ENCODE measurements at regions of chr15 and their contacts with region 1.

Region 1: DNA sequence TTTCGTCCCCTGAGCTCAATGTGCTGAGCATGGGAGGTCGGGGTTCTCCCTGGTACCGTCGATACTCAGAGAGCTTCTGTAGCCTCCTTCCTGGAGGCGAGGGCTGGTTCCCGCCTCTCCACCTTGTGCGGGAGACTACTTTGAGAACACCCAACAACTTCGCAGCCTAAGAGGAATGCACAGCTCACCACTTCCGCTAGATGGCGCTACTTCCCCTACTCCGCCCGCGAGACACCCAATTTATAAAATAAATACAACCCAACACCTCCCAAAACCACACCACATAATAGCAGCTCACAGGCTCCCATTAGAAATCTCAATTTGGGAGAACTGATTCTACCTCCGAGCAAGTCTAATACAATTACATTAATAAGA is 1.2 kb downstream of the RGMA start:
- DNase-seq: peak; percentile 59 to 65 (median 62)
- H3K4me3 ChIP-seq: peak overlapping the region; percentile 3 to 73 (median 41)
- H3K4me3 Mint-ChIP-seq: peak overlapping the region; percentile 83 to 98
- H3K27ac ChIP-seq: no peak overlapping the region
- H3K27ac Mint-ChIP-seq: peak overlapping the region in 2 of 7 donors; percentile 15 to 61
- H3K4me1 ChIP-seq: peaks cover 9 to 23% of the 10 kb centered on the region in 2 donors
- H3K4me1 Mint-ChIP-seq: peaks cover 15% of the 10 kb centered on the region
- H3K27me3 ChIP-seq: peaks cover 50 to 77% of the 10 kb centered on the region in 2 donors
- H3K27me3 Mint-ChIP-seq: peaks cover 23 to 65% (median 51%) of the 10 kb centered on the region in 3 donors
- CTCF ChIP-seq: peak; percentile 91

Region 2: GRCh38 chr15:93302080-93302765 is 214.4 kb after region 1 on chr15:
- intact Hi-C with region 1: loop called (anchors 10 kb)
- DNase-seq: no peak
- H3K4me3 ChIP-seq: no peak overlapping the region
- H3K4me3 Mint-ChIP-seq: no peak overlapping the region
- H3K27ac ChIP-seq: no peak overlapping the region
- H3K27ac Mint-ChIP-seq: peak overlapping the region in 1 of 7 donors; percentile 8
- H3K4me1 ChIP-seq: peaks cover 0 to 6% of the 10 kb centered on the region in 2 donors
- H3K4me1 Mint-ChIP-seq: peaks cover 6% of the 10 kb centered on the region
- H3K27me3 ChIP-seq: no peaks in the 10 kb centered on the region
- H3K27me3 Mint-ChIP-seq: peaks cover 2 to 7% (median 5%) of the 10 kb centered on the region in 3 donors
- CTCF ChIP-seq: no peak

Region 3: GRCh38 chr15:93331545-93332167 is 243.8 kb after region 1 on chr15:
- intact Hi-C with region 1: loop called in 1 of 2 experiments (anchors 10 kb)
- DNase-seq: no peak
- H3K4me3 ChIP-seq: no peak overlapping the region
- H3K4me3 Mint-ChIP-seq: peak overlapping the region in 1 of 2 donors; percentile 46
- H3K27ac ChIP-seq: no peak overlapping the region
- H3K27ac Mint-ChIP-seq: peak overlapping the region in 2 of 7 donors; percentile 2 to 32
- H3K4me1 ChIP-seq: no peaks in the 10 kb centered on the region
- H3K4me1 Mint-ChIP-seq: peaks cover 2% of the 10 kb centered on the region
- H3K27me3 ChIP-seq: peaks cover 16 to 24% of the 10 kb centered on the region in 2 donors
- H3K27me3 Mint-ChIP-seq: peaks cover 32 to 42% (median 33%) of the 10 kb centered on the region in 3 donors
- CTCF ChIP-seq: no peak

Region 4: DNA sequence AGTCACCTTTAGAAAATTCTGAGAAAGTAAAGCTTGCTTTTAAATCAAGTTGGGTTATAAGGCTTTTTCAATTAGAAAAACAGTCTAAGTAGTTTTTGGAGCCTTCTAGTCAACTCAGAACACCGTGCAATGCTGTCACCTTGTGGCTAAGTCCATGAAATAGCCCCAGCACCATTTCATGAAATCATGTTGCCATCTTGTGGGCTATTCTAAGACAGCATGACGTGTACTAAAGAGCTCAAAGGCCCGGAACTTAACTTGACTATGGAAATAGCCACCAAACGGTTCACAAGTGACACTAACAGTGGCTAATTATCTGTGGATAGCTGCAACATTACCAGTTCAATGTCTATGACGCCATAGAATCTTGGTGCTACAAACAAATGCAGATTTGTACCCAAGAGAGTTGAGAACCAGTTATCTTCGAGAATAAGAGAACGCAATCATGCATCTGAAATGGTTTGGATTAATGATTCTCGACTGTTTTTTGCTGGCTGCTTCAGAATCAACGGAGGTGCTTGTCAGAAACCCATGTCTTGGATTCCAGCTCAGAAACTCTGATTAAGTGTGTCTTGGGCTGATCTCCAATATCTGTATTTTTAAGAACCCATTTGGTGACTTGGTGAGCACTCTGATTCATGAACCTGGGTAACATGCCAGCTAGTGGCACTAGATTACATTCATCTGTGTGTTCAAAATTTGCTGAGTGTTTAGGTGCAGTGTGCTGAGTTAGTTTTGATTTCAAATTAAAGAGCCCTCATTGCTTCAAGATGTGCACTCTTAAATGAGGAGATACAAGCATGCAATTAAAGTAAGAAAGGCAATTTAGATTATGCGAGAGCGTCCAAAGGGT is 1032.3 kb after region 1 on chr15:
- intact Hi-C with region 1: loop called (anchors 5 to 10 kb)
- DNase-seq: peak; percentile 50 to 70 (median 67)
- H3K4me3 ChIP-seq: no peak overlapping the region
- H3K4me3 Mint-ChIP-seq: no peak overlapping the region
- H3K27ac ChIP-seq: no peak overlapping the region
- H3K27ac Mint-ChIP-seq: no peak overlapping the region
- H3K4me1 ChIP-seq: peaks cover 9 to 19% of the 10 kb centered on the region in 2 donors
- H3K4me1 Mint-ChIP-seq: peaks cover 15% of the 10 kb centered on the region
- H3K27me3 ChIP-seq: no peaks in the 10 kb centered on the region
- H3K27me3 Mint-ChIP-seq: peaks cover 0 to 2% (median 0%) of the 10 kb centered on the region in 3 donors
- CTCF ChIP-seq: peak; percentile 76